Activated CD8-positive, alpha-beta memory T cell treated with anti-CD3 and anti-CD28 coated beads, Interleukin-2, amount 10 ng/mL, durations not matched to agents 7 days and 5 days (primary cell): ENCODE measurements at regions of chr22 and their contacts with region 1.

Region 1: DNA sequence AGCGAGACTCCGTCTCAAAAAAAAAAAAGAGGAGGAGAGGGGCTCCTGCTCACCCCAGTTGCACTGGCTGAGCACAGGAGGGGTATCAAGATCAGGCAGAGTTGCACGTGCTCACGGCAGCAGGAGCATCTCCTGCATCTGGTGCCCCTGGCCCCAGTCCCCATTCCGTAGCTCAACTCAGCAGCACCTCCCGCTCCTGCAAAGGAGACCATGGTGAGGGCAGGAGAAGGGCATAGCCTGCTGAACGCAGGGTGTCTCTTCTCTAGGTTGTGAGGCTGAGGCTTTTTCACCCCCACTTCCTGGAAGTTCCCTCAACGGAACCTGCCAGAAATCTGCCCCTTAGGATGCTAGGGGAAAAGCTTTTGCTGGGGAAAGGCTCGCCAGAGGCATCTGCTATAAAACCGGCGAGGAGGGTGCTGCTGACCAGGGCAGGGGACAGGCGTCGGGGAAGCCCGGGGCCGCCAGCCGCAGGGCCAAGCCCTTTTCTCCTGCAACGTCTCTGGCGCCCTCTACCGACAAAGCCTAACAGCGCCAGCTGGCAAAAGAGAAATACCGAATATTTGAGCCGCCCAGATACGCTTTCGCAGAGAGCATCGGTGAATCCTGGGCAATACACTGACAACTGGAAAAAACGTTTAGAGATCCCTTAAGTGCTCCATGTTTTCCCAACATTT is 1.0 kb upstream of the PPP6R2 start:
- DNase-seq: peak; percentile 93
- ATAC-seq: peak; percentile 58
- H3K4me3 Mint-ChIP-seq: peak overlapping the region; percentile 77
- H3K27ac Mint-ChIP-seq: peak overlapping the region; percentile 89
- H3K4me1 Mint-ChIP-seq: peaks cover 8% of the 10 kb centered on the region
- H3K27me3 Mint-ChIP-seq: no peaks in the 10 kb centered on the region

Region 2: GRCh38 chr22:50244420-50245213 is 97.5 kb before region 1 on chr22 and contains the start of gene TUBGCP6:
- CTCF ChIA-PET with region 1: interaction called, 22 read pairs
- DNase-seq: peak; percentile 95
- ATAC-seq: peak; percentile 84
- H3K4me3 Mint-ChIP-seq: peak within 1 kb of the TSS; percentile 90
- H3K27ac Mint-ChIP-seq: peak within 1 kb of the TSS; percentile 99
- H3K4me1 Mint-ChIP-seq: peaks cover 46% of the 10 kb centered on the region
- H3K27me3 Mint-ChIP-seq: no peaks in the 10 kb centered on the region
- total RNA-seq, gene TUBGCP6: 60.9 to 72.0 TPM

Region 3: GRCh38 chr22:50250555-50251476 is 91.3 kb before region 1 on chr22 and contains the start of gene HDAC10:
- CTCF ChIA-PET with region 1: interaction called, 42 read pairs
- DNase-seq: peak; percentile 92
- ATAC-seq: peak; percentile 88
- H3K4me3 Mint-ChIP-seq: peak within 1 kb of the TSS; percentile 84
- H3K27ac Mint-ChIP-seq: peak within 1 kb of the TSS; percentile 85
- H3K4me1 Mint-ChIP-seq: peaks cover 27% of the 10 kb centered on the region
- H3K27me3 Mint-ChIP-seq: no peaks in the 10 kb centered on the region
- total RNA-seq, gene HDAC10: 75.2 to 96.3 TPM

Region 4: GRCh38 chr22:50293441-50294318 is 48.4 kb before region 1 on chr22:
- CTCF ChIA-PET with region 1: interaction called, 11 read pairs
- DNase-seq: no peak
- ATAC-seq: peak; percentile 31
- H3K4me3 Mint-ChIP-seq: no peak overlapping the region
- H3K27ac Mint-ChIP-seq: no peak overlapping the region
- H3K4me1 Mint-ChIP-seq: peaks cover 12% of the 10 kb centered on the region
- H3K27me3 Mint-ChIP-seq: peaks cover 16% of the 10 kb centered on the region

Region 5: DNA sequence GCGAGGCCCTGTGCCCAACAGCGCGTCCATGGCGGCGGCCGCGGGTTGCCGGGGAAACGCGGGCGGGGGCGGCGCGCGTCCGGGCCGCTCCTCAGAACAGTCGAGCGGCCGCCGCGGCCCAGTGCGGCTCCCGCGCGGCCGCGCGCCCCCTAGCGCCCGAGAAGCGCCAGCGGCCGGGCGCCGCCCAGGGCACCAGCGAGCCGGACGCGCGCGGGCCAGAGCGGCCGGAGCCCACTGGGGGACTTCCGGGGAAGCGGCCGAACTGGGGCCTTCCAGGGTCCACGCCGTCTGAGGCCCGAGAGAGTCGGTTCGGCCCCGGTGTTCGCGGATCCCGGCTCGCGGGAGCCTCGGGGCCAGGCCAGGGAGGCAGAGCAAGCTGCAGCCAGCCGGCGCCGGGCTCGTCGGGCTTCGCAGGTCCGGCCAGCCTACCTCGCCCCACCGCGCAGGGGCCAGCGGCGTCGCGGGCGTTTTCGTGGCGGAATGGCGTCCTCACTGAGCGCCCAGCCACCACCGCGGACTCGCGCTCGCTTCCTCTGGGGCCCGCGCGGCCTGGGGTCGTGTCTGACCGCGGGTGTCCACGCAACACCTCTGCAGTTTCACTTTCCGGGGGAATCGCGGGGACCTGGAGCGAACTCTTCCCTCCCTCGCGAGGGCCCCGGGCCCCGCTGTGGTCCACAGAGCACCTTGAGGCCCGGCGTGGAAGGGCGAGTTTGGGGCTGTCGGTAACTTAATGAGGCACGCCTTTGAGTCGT is 15.0 kb before region 1 on chr22 and contains the start of gene DENND6B:
- CTCF ChIA-PET with region 1: interaction called, 21 read pairs
- DNase-seq: peak; percentile 73
- ATAC-seq: peak; percentile 96
- H3K4me3 Mint-ChIP-seq: peak within 1 kb of the TSS; percentile 74
- H3K27ac Mint-ChIP-seq: peak within 1 kb of the TSS; percentile 83
- H3K4me1 Mint-ChIP-seq: peaks cover 17% of the 10 kb centered on the region
- H3K27me3 Mint-ChIP-seq: peaks cover 13% of the 10 kb centered on the region
- total RNA-seq, gene DENND6B: 5.7 to 8.8 TPM

Region 6: DNA sequence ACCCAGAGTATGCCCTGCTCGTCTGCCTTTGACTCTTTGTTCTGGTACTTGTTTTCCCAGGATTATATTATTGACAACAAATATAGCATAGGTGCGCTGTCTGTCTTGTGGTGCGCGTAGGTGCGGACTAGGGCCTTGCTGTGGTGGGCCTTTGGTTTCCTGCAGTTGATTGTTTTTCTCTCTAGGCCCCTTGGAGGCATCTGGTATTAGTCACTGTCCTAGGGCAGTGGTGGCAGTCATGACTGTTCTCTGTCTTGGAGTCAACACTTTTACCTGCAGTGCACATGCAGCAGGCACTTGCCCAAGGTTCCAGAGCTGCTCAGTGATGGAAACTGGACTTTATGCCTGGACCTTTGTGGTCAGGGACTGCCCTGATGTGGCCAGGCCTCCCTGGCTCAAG is 19.6 kb after region 1 on chr22:
- CTCF ChIA-PET with region 1: interaction called, 35 read pairs
- DNase-seq: peak; percentile 87
- ATAC-seq: peak; percentile 87
- H3K4me3 Mint-ChIP-seq: peak overlapping the region; percentile 49
- H3K27ac Mint-ChIP-seq: peak overlapping the region; percentile 96
- H3K4me1 Mint-ChIP-seq: peaks cover 68% of the 10 kb centered on the region
- H3K27me3 Mint-ChIP-seq: no peaks in the 10 kb centered on the region

Region 7: GRCh38 chr22:50367778-50368500 is 25.8 kb after region 1 on chr22:
- CTCF ChIA-PET with region 1: interaction called, 35 read pairs
- DNase-seq: no peak
- ATAC-seq: no peak
- H3K4me3 Mint-ChIP-seq: no peak overlapping the region
- H3K27ac Mint-ChIP-seq: no peak overlapping the region
- H3K4me1 Mint-ChIP-seq: peaks cover 27% of the 10 kb centered on the region
- H3K27me3 Mint-ChIP-seq: no peaks in the 10 kb centered on the region

Region 8: DNA sequence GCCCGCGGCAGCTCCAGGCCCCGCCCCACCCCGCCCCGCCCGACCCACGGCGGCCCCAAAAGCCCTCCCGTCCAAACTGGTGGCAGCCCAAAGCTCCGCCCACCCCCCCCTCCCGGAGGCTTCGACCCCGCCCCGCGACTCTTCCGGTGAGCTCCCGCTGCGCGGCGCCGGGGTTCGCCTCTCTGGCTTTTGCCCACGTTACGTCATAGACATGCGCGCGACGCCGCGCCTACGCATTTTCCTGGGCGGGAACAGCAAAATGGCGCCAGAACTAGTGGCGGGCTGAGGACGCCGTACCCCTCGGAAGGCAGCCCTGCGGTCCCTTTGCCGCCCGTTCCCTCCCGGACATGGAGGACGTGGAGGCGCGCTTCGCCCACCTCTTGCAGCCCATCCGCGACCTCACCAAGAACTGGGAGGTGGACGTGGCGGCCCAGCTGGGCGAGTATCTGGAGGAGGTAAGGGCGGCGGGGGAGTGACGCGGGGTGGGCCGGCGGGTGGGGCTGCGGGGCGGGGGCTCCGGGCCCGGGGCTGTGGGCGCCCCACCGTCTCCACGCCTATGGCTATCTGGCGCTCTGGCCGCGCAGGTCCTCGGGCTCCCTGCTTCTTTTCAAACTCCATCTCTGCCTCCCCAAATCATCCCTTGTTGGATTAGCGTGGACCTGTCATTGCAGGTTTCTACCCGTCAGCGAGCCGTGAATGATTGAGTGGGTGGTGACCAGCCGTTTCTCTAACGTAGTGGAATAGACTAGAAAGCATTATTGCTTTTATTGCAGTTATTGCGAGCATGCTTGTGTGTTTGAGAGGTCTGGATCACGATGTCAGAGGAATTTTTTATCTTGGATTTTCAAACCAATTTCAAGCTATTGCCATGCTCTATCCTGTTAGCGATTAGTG is 166.1 kb after region 1 on chr22 and contains the start of gene NCAPH2:
- CTCF ChIA-PET with region 1: no interaction called
- DNase-seq: peak; percentile 98
- ATAC-seq: peak; percentile 74
- H3K4me3 Mint-ChIP-seq: peak within 1 kb of the TSS; percentile 98
- H3K27ac Mint-ChIP-seq: peak within 1 kb of the TSS; percentile 93
- H3K4me1 Mint-ChIP-seq: peaks cover 37% of the 10 kb centered on the region
- H3K27me3 Mint-ChIP-seq: no peaks in the 10 kb centered on the region
- total RNA-seq, gene NCAPH2: 136 to 181 TPM